ENCODE measurements at regions of chr6 and their contacts with region 1.

Region 1: GRCh38 chr6:138115877-138116660 is 8.8 kb upstream of the PERP start:
- DNase-seq: peak; percentile 53
- H3K4me3 Mint-ChIP-seq: no peak overlapping the region
- H3K27ac Mint-ChIP-seq: no peak overlapping the region
- H3K4me1 Mint-ChIP-seq: peaks cover 8% of the 10 kb centered on the region
- H3K27me3 Mint-ChIP-seq: peaks cover 38% of the 10 kb centered on the region

Region 2: DNA sequence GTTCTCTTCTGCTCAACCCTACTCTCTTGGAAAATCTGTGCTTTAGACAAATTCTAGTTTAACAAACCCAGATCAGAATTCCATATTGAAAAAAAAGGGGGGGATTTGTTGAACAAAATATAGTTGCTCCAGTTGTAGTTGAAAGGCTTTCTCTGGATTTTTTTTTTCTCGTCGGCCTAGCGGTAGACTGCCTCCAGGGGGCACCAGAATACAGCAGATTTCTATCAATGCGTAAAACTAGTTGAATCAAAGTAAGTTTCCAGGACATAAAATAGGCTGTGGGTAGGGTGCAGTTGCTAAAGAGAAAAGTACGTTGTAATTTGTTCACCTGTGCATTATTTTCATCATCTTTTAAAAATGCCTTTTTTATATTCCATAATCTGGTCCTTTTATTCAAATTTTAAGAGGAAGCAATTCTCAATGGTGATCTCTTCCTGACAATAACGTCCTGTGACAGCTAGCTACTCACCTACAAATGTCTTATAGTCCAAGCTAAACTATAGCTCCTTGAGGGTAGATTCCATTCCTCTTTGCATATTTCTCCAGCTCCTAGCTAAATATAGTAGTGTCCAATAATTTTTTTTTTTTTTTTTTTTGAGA is 114.2 kb before region 1 on chr6:
- CTCF ChIA-PET with region 1: interaction called, 22 read pairs
- POLR2A ChIA-PET with region 1: no interaction called
- DNase-seq: peak; percentile 65
- H3K4me3 Mint-ChIP-seq: no peak overlapping the region
- H3K27ac Mint-ChIP-seq: no peak overlapping the region
- H3K4me1 Mint-ChIP-seq: peaks cover 12% of the 10 kb centered on the region
- H3K27me3 Mint-ChIP-seq: no peaks in the 10 kb centered on the region

Region 3: GRCh38 chr6:138025528-138025978 is 90.5 kb before region 1 on chr6:
- CTCF ChIA-PET with region 1: no interaction called
- POLR2A ChIA-PET with region 1: no interaction called
- DNase-seq: no peak
- H3K4me3 Mint-ChIP-seq: no peak overlapping the region
- H3K27ac Mint-ChIP-seq: no peak overlapping the region
- H3K4me1 Mint-ChIP-seq: no peaks in the 10 kb centered on the region
- H3K27me3 Mint-ChIP-seq: peaks cover 4% of the 10 kb centered on the region

Region 4: DNA sequence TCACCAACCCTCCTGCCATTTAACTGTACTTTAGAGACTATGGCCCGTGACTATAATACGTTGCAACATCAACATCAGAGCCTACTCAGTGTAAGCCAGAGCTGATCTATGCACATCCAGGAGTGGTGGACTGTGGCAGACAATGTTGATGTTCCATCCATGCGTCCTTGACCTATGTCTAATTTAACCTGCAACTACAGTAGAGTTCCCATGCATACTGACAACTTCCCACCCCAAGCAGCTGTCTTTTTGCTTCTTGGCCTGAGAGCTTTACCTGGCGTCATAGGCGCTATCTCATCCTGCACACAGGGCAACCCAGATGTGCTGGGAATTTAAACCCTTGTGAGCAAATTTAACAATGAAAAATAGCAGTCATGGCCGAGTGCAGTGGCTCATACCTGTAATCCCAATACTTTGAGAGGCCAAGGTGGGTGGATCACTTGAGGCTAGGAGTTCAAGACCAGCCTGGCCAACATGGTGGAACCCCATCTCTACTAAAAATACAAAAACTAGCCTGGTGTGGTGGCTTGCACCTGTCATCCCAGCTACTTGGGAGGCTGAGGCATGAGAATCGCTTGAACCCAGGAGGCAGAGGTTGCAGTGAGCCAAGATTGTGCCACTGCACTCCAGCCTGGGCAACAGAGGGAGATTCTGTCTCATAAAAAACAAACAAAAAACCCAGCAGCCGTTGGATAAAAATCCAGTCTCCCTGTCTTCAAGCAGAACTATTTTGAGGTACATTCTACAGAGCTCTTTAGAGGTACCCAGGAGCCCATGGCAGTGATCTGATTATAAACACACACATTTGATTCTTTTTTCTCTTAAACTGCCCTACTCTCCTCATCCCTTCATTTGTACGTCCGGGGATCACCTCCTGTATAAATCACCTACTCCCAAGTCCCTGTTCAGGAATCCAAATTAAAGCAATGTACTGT is 30.9 kb before region 1 on chr6:
- CTCF ChIA-PET with region 1: no interaction called
- POLR2A ChIA-PET with region 1: no interaction called
- DNase-seq: no peak
- H3K4me3 Mint-ChIP-seq: no peak overlapping the region
- H3K27ac Mint-ChIP-seq: no peak overlapping the region
- H3K4me1 Mint-ChIP-seq: no peaks in the 10 kb centered on the region
- H3K27me3 Mint-ChIP-seq: peaks cover 1% of the 10 kb centered on the region

Region 5: GRCh38 chr6:138161338-138162110 is 45.5 kb after region 1 on chr6 and contains the start of gene ARFGEF3:
- CTCF ChIA-PET with region 1: no interaction called
- POLR2A ChIA-PET with region 1: no interaction called
- DNase-seq: peak; percentile 64
- H3K4me3 Mint-ChIP-seq: peak within 1 kb of the TSS; percentile 71
- H3K27ac Mint-ChIP-seq: no peak within 1 kb of the TSS
- H3K4me1 Mint-ChIP-seq: peaks cover 13% of the 10 kb centered on the region
- H3K27me3 Mint-ChIP-seq: peaks cover 60% of the 10 kb centered on the region
- total RNA-seq, gene ARFGEF3: 0.50 to 0.55 TPM

Region 6: GRCh38 chr6:138287144-138287955 is 171.3 kb after region 1 on chr6:
- CTCF ChIA-PET with region 1: interaction called, 49 read pairs
- POLR2A ChIA-PET with region 1: no interaction called
- DNase-seq: peak; percentile 51
- H3K4me3 Mint-ChIP-seq: no peak overlapping the region
- H3K27ac Mint-ChIP-seq: no peak overlapping the region
- H3K4me1 Mint-ChIP-seq: peaks cover 5% of the 10 kb centered on the region
- H3K27me3 Mint-ChIP-seq: no peaks in the 10 kb centered on the region

Region 7: DNA sequence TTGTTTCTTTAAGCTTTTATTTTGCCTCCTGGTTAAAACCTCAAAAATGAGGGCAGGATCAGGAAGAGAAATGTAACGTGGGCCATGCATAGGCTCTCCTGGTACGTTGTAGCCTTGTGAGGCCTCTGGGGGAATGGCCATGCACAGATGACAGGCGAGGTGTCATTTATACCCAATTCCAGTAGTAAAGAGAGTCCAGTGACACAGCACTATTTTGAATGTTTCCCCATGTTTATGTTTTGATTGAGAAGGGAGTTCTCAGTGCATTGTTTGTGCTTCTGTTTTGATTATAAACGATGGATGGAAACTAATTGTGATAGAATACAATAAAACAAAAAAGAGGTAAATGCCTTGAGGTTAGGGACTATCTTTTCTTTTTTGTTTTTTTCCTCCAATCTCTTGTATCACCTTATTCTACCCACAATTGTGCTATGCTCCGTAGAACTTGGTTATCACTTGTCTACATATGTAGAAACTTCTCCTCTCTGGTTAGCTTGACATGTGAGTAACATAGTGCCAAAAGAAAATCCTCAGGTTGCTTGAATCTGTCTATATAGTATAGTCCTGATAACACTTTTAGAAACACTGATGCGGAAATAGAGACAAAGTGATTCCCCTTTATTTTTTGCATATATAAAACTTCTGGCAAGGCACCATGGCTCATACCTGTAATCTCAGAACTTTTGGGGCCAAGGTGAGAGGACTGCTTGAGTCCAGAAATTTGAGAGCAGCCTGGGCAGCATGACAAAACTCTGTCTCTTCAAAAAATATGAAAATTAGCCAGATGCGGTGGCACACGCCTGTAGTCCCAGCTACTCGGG is 254.8 kb after region 1 on chr6:
- CTCF ChIA-PET with region 1: no interaction called
- POLR2A ChIA-PET with region 1: no interaction called
- DNase-seq: no peak
- H3K4me3 Mint-ChIP-seq: no peak overlapping the region
- H3K27ac Mint-ChIP-seq: no peak overlapping the region
- H3K4me1 Mint-ChIP-seq: peaks cover 8% of the 10 kb centered on the region
- H3K27me3 Mint-ChIP-seq: peaks cover 21% of the 10 kb centered on the region

Region 8: GRCh38 chr6:138509371-138509770 is 393.3 kb after region 1 on chr6:
- CTCF ChIA-PET with region 1: interaction called, 35 read pairs
- POLR2A ChIA-PET with region 1: interaction called, 3 read pairs
- DNase-seq: peak; percentile 59
- H3K4me3 Mint-ChIP-seq: no peak overlapping the region
- H3K27ac Mint-ChIP-seq: no peak overlapping the region
- H3K4me1 Mint-ChIP-seq: peaks cover 2% of the 10 kb centered on the region
- H3K27me3 Mint-ChIP-seq: peaks cover 9% of the 10 kb centered on the region

Region 9: DNA sequence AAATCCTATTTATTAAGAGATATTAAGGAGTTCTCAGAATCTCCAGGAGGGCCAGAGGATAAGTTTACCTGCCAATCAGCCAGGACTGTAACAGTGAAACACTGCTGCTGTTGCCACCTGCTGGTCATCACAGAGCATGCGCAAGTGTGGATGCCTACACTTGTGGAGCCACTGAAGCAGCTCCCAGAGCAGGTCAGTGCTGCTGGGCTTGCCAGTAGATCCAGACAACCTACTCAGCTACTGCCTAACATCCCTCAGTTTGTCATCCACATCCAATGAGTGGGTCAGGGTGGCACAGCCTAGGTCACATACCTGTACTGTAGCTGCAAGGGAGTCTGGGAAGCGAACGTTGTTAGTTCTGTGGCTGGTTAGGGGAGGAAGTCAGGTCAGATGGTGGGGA is 401.6 kb after region 1 on chr6:
- CTCF ChIA-PET with region 1: interaction called, 32 read pairs
- POLR2A ChIA-PET with region 1: no interaction called
- DNase-seq: peak; percentile 67
- H3K4me3 Mint-ChIP-seq: no peak overlapping the region
- H3K27ac Mint-ChIP-seq: no peak overlapping the region
- H3K4me1 Mint-ChIP-seq: peaks cover 31% of the 10 kb centered on the region
- H3K27me3 Mint-ChIP-seq: peaks cover 4% of the 10 kb centered on the region